Breast epithelium (tissue), 4 donors: ENCODE measurements at regions of chr1 and their contacts with region 1.

Region 1: DNA sequence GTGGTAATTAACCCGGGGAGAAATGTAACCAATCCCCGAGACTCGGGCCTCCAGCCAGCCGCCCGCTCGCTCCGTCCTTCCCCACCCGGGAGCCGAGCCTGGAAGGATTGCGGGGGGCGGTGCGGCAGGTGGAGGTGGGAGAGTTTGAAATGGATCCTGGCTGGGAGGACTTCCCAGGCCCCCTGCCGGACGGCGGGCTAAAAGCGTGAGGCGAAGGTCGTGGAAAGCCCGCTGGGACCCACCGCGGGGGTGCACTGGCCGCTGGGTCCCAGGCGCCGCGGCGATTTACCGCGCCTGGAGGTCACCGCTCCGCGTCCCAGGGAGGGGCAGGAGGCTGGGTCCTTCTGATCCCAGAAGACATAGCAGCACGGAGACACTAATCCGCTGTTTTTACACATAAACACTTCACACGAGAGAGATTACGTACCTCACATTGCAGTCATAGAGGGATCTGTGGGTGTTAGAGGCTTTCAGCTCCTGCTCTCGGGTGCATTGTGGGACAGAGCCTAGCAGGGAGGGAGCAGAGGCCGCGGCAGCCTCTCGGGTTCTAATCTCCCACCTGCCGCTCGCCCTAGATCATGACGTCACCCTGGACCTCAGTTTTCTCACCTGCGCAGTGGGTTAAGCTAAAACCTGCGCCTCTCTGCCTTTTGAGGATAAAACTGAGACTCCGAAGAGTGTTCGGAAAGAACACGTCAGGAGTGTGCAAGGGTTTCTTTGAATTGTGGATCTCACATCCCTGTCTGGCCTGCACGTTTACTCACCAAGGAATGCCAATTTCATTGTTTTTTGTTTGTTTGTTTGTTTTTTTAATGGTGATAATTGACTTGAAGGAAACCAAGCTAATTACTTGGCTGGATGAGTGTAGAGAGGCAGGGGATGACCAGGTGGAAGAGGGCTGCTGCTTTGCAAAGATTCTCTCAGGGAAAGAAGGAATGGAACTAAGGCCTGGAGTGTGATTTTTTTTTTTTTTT is 17.1 kb upstream of the TMEM9 start:
- DNase-seq: no peak
- H3K4me3 ChIP-seq: peak overlapping the region; percentile 55 to 77 (median 71)
- H3K27ac ChIP-seq: peak overlapping the region; percentile 95
- H3K4me1 ChIP-seq: peaks cover 0 to 2% of the 10 kb centered on the region in 2 donors
- H3K27me3 ChIP-seq: no peaks in the 10 kb centered on the region
- CTCF ChIP-seq: peak in 2 of 3 donors; percentile 48 to 50
- POLR2A ChIP-seq: no peak

Region 2: DNA sequence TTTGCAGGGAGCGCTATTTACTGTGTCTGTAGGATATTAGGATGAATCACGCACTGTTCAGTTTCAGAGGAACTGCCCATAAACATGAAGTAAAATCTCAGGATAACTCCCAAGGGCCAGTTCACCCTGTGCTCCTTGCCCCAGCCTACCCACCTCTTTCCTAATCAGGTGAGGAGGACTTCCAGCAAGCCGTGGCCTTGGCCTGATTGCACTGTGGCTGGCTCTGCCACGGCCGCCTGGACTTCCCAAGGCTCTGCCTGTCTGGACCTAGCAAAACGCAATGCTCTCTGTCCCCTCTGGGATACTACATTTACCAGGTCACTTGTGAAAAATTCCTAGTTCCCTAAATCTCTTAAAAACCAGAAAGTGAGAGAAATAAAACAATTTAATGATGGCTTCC is 36.9 kb before region 1 on chr1:
- intact Hi-C with region 1: loop called (anchors 2 kb)
- DNase-seq: no peak
- H3K4me3 ChIP-seq: no peak overlapping the region
- H3K27ac ChIP-seq: no peak overlapping the region
- H3K4me1 ChIP-seq: no peaks in the 10 kb centered on the region
- H3K27me3 ChIP-seq: no peaks in the 10 kb centered on the region
- CTCF ChIP-seq: no peak
- POLR2A ChIP-seq: no peak

Region 3: GRCh38 chr1:201154389-201155165 is 16.8 kb before region 1 on chr1 and contains the start of gene TMEM9:
- intact Hi-C with region 1: loop called (anchors 2 kb)
- DNase-seq: peak; percentile 96 to 99
- H3K4me3 ChIP-seq: peak within 1 kb of the TSS; percentile 74 to 90 (median 86)
- H3K27ac ChIP-seq: peak within 1 kb of the TSS; percentile 64 to 79
- H3K4me1 ChIP-seq: peaks cover 0 to 4% of the 10 kb centered on the region in 2 donors
- H3K27me3 ChIP-seq: no peaks in the 10 kb centered on the region
- CTCF ChIP-seq: no peak
- POLR2A ChIP-seq: peak; percentile 23
- total RNA-seq, gene TMEM9: 48.3 to 104 (median 99.8) TPM

Region 4: GRCh38 chr1:201309426-201309825 is 138.1 kb after region 1 on chr1:
- intact Hi-C with region 1: no loop called
- DNase-seq: peak; percentile 97 to 99
- H3K4me3 ChIP-seq: peak overlapping the region in 1 of 3 donors; percentile 35
- H3K27ac ChIP-seq: peak overlapping the region; percentile 97
- H3K4me1 ChIP-seq: peaks cover 19 to 48% of the 10 kb centered on the region in 2 donors
- H3K27me3 ChIP-seq: no peaks in the 10 kb centered on the region
- CTCF ChIP-seq: peak in 2 of 3 donors; percentile 13 to 31
- POLR2A ChIP-seq: no peak